ENCODE measurements at regions of chr1 and their contacts with region 1.

Region 1: DNA sequence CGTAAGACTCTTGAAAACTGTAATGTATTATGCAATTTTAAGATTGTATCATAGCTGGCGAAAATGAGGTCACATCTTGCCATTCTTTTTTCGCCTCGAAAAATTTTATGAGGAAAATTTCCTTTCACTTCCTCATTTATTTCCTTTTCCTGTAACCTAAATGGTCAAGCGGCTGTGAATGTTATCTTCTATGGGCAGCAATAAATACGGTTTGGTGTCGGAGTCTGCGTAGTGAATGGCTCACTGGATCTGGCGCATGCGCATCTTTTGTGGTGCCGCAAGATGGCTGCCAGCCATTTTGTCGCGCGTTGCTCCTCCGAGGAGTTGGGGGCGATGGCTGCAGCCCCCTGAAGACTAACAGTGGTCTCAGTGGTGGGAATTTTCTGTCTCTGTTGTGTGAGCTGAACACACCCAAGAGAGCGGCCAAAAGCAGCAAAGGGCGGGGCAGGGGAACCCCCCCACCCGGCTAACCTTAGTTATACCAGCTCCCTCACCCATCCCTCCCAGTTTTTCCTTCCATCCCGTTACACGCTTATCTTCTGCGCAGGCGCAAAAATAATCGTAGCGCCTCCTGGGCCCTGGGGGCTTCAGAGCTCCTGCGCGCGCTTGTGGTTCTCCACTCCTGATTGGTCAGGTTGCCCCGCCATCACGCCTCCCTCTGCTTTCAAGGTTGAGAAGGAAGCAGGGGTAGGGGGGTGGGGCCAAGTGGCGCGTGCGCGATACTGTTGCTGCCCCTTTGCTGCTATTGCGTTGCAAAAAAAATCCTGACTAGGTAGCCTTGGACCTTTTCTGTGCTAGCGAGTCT is at the start of gene RPRD2:
- DNase-seq: peak; percentile 94 to 100 (median 100)
- ATAC-seq: peak; percentile 89 to 92
- H3K4me3 Mint-ChIP-seq: peak within 1 kb of the TSS; percentile 86 to 100 (median 98)
- H3K27ac Mint-ChIP-seq: peak within 1 kb of the TSS; percentile 95 to 100 (median 98)
- H3K4me1 Mint-ChIP-seq: peaks cover 16 to 34% (median 31%) of the 10 kb centered on the region in 4 donors
- H3K27me3 Mint-ChIP-seq: no peaks in the 10 kb centered on the region
- polyA plus RNA-seq, gene RPRD2: 22.5 to 40.5 (median 31.6) TPM

Region 2: GRCh38 chr1:150235852-150236613 is 127.6 kb before region 1 on chr1 and contains the start of gene ANP32E:
- POLR2A ChIA-PET with region 1: interaction called, 19 read pairs
- DNase-seq: peak; percentile 79 to 98 (median 95)
- ATAC-seq: peak; percentile 88
- H3K4me3 Mint-ChIP-seq: peak within 1 kb of the TSS in 6 of 10 donors; percentile 91 to 98 (median 98)
- H3K27ac Mint-ChIP-seq: peak within 1 kb of the TSS in 9 of 10 donors; percentile 70 to 99 (median 97)
- H3K4me1 Mint-ChIP-seq: peaks cover 11 to 21% (median 20%) of the 10 kb centered on the region in 4 donors
- H3K27me3 Mint-ChIP-seq: no peaks in the 10 kb centered on the region
- polyA plus RNA-seq, gene ANP32E: 47.5 to 51.0 (median 50.3) TPM

Region 3: GRCh38 chr1:150321826-150322166 is 41.8 kb before region 1 on chr1:
- POLR2A ChIA-PET with region 1: interaction called, 39 read pairs
- DNase-seq: peak in 4 of 10 donors; percentile 5 to 30 (median 14)
- ATAC-seq: peak in 1 of 2 donors; percentile 7
- H3K4me3 Mint-ChIP-seq: peak overlapping the region; percentile 93 to 100 (median 98)
- H3K27ac Mint-ChIP-seq: peak overlapping the region; percentile 97 to 100 (median 98)
- H3K4me1 Mint-ChIP-seq: peaks cover 10 to 48% (median 41%) of the 10 kb centered on the region in 4 donors
- H3K27me3 Mint-ChIP-seq: no peaks in the 10 kb centered on the region

Region 4: DNA sequence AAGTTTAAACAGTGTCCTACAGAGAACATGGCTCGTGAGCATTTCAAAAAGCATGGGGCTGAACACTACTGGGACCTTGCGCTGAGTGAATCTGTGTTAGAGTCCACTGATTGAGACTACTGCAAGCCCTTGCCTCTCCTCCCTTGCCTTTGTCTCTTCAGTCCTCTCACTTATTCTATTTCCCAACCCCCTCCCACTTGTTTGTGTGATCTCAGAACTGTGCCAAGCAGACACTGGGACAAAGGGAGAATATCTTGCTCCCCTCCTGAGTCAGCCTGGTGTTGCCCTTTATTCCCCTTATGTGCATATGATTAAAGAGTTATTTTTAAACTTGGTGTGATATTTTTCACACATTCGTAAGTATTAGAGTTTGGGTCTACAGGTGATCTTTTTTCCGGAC is 10.8 kb before region 1 on chr1:
- POLR2A ChIA-PET with region 1: interaction called, 12 read pairs
- DNase-seq: no peak
- ATAC-seq: no peak
- H3K4me3 Mint-ChIP-seq: no peak overlapping the region
- H3K27ac Mint-ChIP-seq: peak overlapping the region in 5 of 10 donors; percentile 8 to 68 (median 60)
- H3K4me1 Mint-ChIP-seq: peaks cover 0 to 3% (median 0%) of the 10 kb centered on the region in 4 donors
- H3K27me3 Mint-ChIP-seq: no peaks in the 10 kb centered on the region

Region 5: DNA sequence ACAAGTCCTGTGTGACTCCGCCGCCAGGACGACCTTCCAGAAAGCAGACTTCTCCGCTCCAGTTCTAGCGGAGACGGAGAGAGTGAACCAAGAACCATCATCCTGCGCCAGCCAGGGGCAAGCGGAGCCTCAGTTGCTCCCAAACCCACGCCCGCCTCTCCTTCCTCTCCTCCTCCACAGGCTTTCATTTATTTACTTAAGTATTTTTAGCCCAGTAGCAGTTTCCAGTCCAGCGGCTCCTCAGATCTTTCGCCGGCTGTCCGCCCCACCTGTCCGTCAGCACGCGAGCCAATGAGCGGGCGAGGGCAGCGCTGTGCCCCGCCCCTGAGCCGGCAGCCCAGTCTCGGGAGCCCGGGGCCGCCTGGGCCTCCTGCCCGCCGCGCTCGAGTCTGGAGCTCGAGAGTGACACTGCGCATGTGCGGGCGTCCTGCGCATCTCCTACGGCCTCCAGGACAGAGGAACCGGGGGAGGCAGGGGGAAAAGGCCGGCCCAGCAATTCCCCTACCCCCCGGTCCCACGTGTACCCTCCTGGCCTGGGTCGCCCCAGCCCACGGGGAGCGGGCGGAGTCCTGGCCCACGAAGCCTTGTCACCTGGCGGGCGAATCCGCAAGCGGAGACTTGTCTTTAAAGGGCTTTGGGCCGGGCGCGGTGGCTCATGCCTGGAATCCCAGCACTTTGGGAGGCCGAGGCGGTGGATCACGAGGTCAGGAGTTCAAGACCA is 151.9 kb after region 1 on chr1 and contains the start of gene FALEC:
- POLR2A ChIA-PET with region 1: interaction called, 13 read pairs
- DNase-seq: peak; percentile 81 to 93 (median 88)
- ATAC-seq: peak; percentile 98
- H3K4me3 Mint-ChIP-seq: peak within 1 kb of the TSS; percentile 89 to 94 (median 93)
- H3K27ac Mint-ChIP-seq: peak within 1 kb of the TSS; percentile 48 to 95 (median 87)
- H3K4me1 Mint-ChIP-seq: peaks cover 12 to 22% (median 19%) of the 10 kb centered on the region in 4 donors
- H3K27me3 Mint-ChIP-seq: no peaks in the 10 kb centered on the region
- polyA plus RNA-seq, gene FALEC: 0.38 to 1.3 TPM in 2 of 3 donors, not detected in the other

Region 6: DNA sequence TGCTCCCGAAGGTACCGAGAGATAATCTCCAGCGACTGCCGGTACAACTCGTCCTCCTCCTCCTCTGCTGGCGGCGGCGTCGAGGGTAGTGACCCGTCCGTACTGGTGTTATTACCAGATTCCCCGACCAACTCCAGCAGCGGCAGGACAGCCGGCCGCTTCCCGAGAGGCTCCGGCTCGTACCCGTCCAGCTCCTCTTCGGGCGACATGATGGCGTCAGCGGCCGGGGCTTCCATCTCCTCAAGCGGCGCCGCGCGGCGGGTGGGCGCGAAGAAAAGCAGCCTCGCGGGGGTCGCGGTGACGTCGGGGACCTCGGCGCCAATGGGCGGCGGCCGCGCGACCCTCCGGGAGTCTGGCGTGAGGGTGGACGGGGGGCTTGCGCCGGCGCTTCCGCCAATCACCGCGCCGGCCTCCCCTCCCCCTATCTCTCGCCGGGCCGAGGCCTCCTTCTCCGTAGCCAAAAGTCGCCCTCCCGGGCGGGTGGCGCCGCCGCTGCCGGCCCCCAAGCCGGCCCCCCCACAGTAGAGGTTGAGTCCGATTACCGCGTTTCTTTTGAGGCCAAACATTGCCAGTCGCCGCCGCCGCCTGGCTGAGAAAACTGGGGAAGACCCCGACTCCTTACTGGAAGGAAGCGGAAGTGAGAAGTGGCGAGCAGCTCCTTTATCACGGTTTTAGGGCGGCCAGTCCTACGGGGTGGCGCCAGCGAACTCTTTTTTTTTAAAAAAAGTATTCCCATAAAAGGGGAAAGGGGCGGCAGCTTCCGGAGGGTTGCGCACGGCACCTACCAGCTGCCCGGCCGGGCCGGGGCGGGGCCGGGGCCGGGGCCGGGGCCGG is 215.6 kb after region 1 on chr1 and contains the start of gene MCL1:
- POLR2A ChIA-PET with region 1: interaction called, 13 read pairs
- DNase-seq: peak; percentile 73 to 94 (median 86)
- ATAC-seq: peak; percentile 71 to 75
- H3K4me3 Mint-ChIP-seq: peak within 1 kb of the TSS; percentile 94 to 99 (median 97)
- H3K27ac Mint-ChIP-seq: peak within 1 kb of the TSS; percentile 95 to 99 (median 98)
- H3K4me1 Mint-ChIP-seq: peaks cover 23 to 42% (median 35%) of the 10 kb centered on the region in 4 donors
- H3K27me3 Mint-ChIP-seq: no peaks in the 10 kb centered on the region
- polyA plus RNA-seq, gene MCL1: 125 to 170 (median 146) TPM

Measured in naive thymus-derived CD8-positive, alpha-beta T cell (primary cell).